ENCODE measurements at regions of chr15 and their contacts with region 1.

Region 1: DNA sequence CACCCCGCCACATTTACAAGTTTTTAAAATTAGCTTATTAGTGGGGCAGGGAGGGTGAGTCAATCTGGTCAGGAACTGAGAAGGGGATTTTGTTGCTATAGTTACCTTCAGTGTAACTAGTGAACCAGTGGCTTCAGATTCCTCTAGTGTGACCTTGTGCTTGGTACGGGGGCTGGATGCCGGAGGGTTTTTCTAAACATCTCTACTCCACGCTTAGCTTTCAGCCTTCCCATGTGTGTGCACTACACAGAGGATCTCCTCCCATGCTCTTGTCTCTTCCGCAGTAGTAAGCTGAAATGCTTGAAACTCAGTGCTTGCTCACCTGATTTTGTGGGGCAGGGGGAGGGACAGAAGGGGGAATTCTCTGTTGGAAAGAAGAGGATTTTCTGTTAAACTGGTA is 67.9 kb upstream of the AKAP13 start:
- DNase-seq: no peak
- H3K4me3 ChIP-seq: no peak overlapping the region
- H3K27ac ChIP-seq: no peak overlapping the region
- H3K4me1 ChIP-seq: no peaks in the 10 kb centered on the region
- H3K27me3 ChIP-seq: no peaks in the 10 kb centered on the region
- CTCF ChIP-seq: no peak

Region 2: GRCh38 chr15:85361323-85361722 is 48.8 kb after region 1 on chr15:
- CTCF ChIA-PET with region 1: no interaction called
- POLR2A ChIA-PET with region 1: no interaction called
- intact Hi-C with region 1: loop called (anchors 5 kb)
- DNase-seq: no peak
- H3K4me3 ChIP-seq: no peak overlapping the region
- H3K27ac ChIP-seq: no peak overlapping the region
- H3K4me1 ChIP-seq: peaks cover 9% of the 10 kb centered on the region
- H3K27me3 ChIP-seq: no peaks in the 10 kb centered on the region
- CTCF ChIP-seq: no peak

Measured in A673 (cell line).